Activated CD4-positive, alpha-beta T cell treated with anti-CD3 and anti-CD28 coated beads for 36 hours (primary cell): ENCODE measurements at regions of chr18 and their contacts with region 1.

Region 1: DNA sequence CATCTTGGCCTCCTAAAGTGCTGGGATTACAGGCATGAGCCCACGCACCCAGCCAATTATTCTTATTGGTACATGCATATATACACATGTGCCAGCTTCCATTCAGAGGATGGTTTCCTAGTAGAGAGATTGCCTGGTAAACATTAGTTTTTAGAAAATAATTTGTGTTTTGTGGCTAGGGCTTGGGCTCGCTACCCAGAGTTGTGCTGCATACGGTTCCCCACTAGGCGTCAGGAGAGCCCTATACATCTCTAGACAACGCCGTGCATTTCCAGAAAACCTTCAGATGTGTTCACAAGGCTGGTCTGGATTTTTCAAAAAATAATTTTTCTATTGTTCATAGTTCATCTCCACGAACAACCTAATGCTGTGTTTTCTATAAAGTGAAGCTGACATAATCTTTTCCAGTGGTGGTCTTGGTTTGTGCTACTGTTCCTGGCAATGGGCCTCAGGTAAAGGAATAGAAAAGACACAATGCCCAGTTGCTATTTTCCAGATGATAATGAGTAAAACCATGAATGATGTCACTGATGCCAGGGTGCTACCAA is 14.7 kb upstream of the AFG3L2 start:
- DNase-seq: peak; percentile 72
- ATAC-seq: peak; percentile 97
- H3K4me3 Mint-ChIP-seq: no peak overlapping the region
- H3K27ac Mint-ChIP-seq: no peak overlapping the region
- H3K4me1 Mint-ChIP-seq: no peaks in the 10 kb centered on the region
- H3K27me3 Mint-ChIP-seq: peaks cover 6% of the 10 kb centered on the region

Region 2: GRCh38 chr18:11320986-11321385 is 1070.7 kb before region 1 on chr18:
- CTCF ChIA-PET with region 1: no interaction called
- POLR2A ChIA-PET with region 1: no interaction called
- intact Hi-C with region 1: no loop called
- DNase-seq: no peak
- ATAC-seq: no peak
- H3K4me3 Mint-ChIP-seq: no peak overlapping the region
- H3K27ac Mint-ChIP-seq: no peak overlapping the region
- H3K4me1 Mint-ChIP-seq: peaks cover 4% of the 10 kb centered on the region
- H3K27me3 Mint-ChIP-seq: peaks cover 11% of the 10 kb centered on the region

Region 3: GRCh38 chr18:12520442-12520992 is 128.8 kb after region 1 on chr18:
- CTCF ChIA-PET with region 1: no interaction called
- POLR2A ChIA-PET with region 1: no interaction called
- intact Hi-C with region 1: no loop called
- DNase-seq: no peak
- ATAC-seq: no peak
- H3K4me3 Mint-ChIP-seq: no peak overlapping the region
- H3K27ac Mint-ChIP-seq: no peak overlapping the region
- H3K4me1 Mint-ChIP-seq: no peaks in the 10 kb centered on the region
- H3K27me3 Mint-ChIP-seq: no peaks in the 10 kb centered on the region

Region 4: GRCh38 chr18:12726774-12727550 is 335.3 kb after region 1 on chr18:
- CTCF ChIA-PET with region 1: interaction called, 11 read pairs
- POLR2A ChIA-PET with region 1: no interaction called
- intact Hi-C with region 1: no loop called
- DNase-seq: peak; percentile 66
- ATAC-seq: peak; percentile 73
- H3K4me3 Mint-ChIP-seq: no peak overlapping the region
- H3K27ac Mint-ChIP-seq: no peak overlapping the region
- H3K4me1 Mint-ChIP-seq: peaks cover 3% of the 10 kb centered on the region
- H3K27me3 Mint-ChIP-seq: no peaks in the 10 kb centered on the region